ENCODE measurements at regions of chr4 and their contacts with region 1.

Region 1: GRCh38 chr4:185134307-185134869 is 8.7 kb upstream of the SLC25A4 start:
- DNase-seq: peak in 2 of 9 experiments; percentile 61 to 68
- ATAC-seq: peak; percentile 87
- H3K4me3 ChIP-seq: no peak overlapping the region
- H3K4me3 Mint-ChIP-seq: no peak overlapping the region
- H3K27ac ChIP-seq: no peak overlapping the region
- H3K27ac Mint-ChIP-seq: no peak overlapping the region
- H3K4me1 ChIP-seq: no peaks in the 10 kb centered on the region
- H3K4me1 Mint-ChIP-seq: no peaks in the 10 kb centered on the region
- H3K27me3 ChIP-seq: peaks cover 0 to 5% of the 10 kb centered on the region in 2 experiments
- H3K27me3 Mint-ChIP-seq: peaks cover 37% of the 10 kb centered on the region
- CTCF ChIP-seq: peak; percentile 86

Region 2: DNA sequence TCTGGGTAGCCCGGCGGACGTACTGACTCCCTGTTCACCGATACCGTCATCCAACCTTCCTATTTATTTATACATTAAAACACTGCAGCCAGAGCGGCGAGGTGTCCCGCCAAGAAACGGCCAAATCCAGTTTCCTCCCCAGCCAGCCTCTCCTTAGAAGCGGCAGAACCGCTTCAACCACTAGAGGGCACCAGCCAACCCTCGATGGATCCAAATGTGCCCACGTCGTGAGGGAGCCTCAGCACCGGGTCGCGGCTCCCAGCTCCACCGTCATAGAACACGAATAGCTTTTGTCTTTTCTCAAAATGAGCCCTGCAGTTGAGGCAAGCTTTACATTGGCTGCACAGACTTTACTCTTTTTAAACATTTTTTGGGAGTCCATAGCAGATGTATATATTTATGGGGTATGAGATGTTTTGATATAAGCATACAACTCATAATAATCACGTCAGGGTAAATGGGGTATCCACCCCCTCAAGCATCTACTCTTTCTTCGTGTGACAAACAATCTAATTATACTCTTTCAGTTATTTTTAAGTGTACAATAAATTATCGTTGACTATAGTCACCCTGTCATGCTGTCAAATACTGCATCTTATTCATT is 129.1 kb before region 1 on chr4:
- CTCF ChIA-PET with region 1: interaction called, 5 read pairs
- POLR2A ChIA-PET with region 1: no interaction called
- intact Hi-C with region 1: loop called in 1 of 2 experiments (anchors 2 kb)
- DNase-seq: peak; percentile 50 to 82 (median 76)
- ATAC-seq: peak; percentile 96
- H3K4me3 ChIP-seq: no peak overlapping the region
- H3K4me3 Mint-ChIP-seq: peak overlapping the region; percentile 50
- H3K27ac ChIP-seq: no peak overlapping the region
- H3K27ac Mint-ChIP-seq: no peak overlapping the region
- H3K4me1 ChIP-seq: no peaks in the 10 kb centered on the region
- H3K4me1 Mint-ChIP-seq: peaks cover 4% of the 10 kb centered on the region
- H3K27me3 ChIP-seq: peaks cover 2 to 6% of the 10 kb centered on the region in 2 experiments
- H3K27me3 Mint-ChIP-seq: peaks cover 51% of the 10 kb centered on the region
- CTCF ChIP-seq: peak; percentile 88

Region 3: DNA sequence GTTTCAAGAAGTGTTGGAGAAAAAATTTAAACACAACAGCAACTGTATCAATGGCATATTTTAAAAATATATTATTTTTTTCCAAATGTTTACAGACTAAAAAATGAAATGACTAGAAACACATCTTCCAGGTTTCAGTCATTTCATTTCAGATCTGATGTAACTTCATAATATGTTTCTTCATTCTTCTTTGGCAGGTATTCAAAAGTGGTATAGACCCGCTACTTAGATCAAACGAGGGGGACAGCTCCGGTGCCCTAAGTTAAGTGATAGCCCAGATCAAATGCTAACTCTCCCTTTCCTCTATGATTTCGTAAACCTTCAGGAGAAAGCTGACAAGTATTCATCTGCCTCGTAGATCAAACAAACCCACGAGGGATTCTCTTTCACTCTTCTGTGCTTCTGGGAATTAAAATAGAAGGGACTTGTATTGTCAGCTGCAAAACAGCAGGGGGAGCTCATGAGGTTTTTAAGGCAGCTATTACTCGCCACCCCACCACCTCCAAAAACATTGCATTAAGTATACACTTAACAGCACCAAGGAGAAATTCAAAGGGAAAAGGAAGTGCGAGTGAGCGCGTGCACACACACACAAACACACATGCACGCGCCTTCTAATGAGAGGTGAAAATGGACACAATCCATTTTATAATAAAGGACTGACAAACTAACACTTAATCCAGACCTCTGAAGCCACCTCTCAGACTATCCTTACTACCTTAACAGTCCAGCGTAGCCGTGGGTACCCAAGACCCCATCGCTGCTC is 94.7 kb before region 1 on chr4:
- CTCF ChIA-PET with region 1: interaction called, 23 read pairs
- POLR2A ChIA-PET with region 1: no interaction called
- intact Hi-C with region 1: loop called (anchors 1 kb)
- DNase-seq: peak; percentile 9 to 72 (median 47)
- ATAC-seq: peak; percentile 77
- H3K4me3 ChIP-seq: no peak overlapping the region
- H3K4me3 Mint-ChIP-seq: peak overlapping the region; percentile 44
- H3K27ac ChIP-seq: no peak overlapping the region
- H3K27ac Mint-ChIP-seq: no peak overlapping the region
- H3K4me1 ChIP-seq: peaks cover 6% of the 10 kb centered on the region
- H3K4me1 Mint-ChIP-seq: peaks cover 4% of the 10 kb centered on the region
- H3K27me3 ChIP-seq: no peaks in the 10 kb centered on the region
- H3K27me3 Mint-ChIP-seq: peaks cover 16% of the 10 kb centered on the region
- CTCF ChIP-seq: peak; percentile 86

Region 4: GRCh38 chr4:185122681-185123345 is 11.6 kb before region 1 on chr4:
- CTCF ChIA-PET with region 1: interaction called, 11 read pairs
- POLR2A ChIA-PET with region 1: no interaction called
- intact Hi-C with region 1: no loop called
- DNase-seq: no peak
- ATAC-seq: no peak
- H3K4me3 ChIP-seq: no peak overlapping the region
- H3K4me3 Mint-ChIP-seq: no peak overlapping the region
- H3K27ac ChIP-seq: no peak overlapping the region
- H3K27ac Mint-ChIP-seq: no peak overlapping the region
- H3K4me1 ChIP-seq: peaks cover 5% of the 10 kb centered on the region
- H3K4me1 Mint-ChIP-seq: peaks cover 8% of the 10 kb centered on the region
- H3K27me3 ChIP-seq: peaks cover 0 to 12% of the 10 kb centered on the region in 2 experiments
- H3K27me3 Mint-ChIP-seq: peaks cover 14% of the 10 kb centered on the region
- CTCF ChIP-seq: no peak

Measured in CD8-positive, alpha-beta T cell (primary cell).